ENCODE measurements at regions of chr19 and their contacts with region 1.

Region 1: DNA sequence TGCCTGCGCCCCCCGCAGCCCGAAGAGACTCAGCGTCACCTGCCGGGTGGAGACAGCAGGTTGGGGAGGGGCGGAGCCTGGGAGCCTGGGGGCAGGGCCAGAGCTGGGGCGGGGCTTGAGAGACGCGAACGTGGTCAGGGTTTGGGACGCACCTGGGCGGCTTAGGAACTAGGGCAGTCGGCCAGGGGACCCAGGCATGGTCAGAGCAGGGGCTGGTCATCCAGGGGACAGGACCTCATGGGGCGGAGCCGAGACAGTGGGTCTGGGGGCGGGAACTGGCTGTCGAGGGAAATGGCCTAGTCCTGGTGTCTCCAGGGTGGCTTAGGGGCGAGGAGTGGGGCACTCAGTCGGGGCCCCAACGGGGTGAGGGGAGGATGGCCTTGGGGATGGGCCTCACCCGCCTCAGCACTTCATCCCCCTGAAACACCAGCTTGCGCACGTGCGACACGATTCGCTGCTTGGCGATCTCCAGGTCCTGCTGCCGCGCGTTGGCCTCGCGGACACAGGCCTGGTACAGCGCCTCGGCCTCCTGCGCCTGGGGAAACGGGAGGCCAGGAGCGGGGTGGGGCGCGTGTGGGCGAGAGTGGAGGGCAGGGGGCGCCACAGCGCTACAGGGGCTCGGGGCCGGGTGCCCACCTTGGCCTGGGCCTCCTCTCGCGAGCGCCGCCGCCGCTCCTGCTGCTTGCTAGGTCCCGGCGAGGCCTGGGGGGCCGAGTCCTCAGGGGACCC is 5.8 kb downstream of the GMIP start:
- DNase-seq: peak in 1 of 3 donors; percentile 61
- ATAC-seq: no peak
- H3K4me3 ChIP-seq: no peak overlapping the region
- H3K27ac ChIP-seq: no peak overlapping the region
- H3K4me1 ChIP-seq: no peaks in the 10 kb centered on the region
- H3K27me3 ChIP-seq: no peaks in the 10 kb centered on the region

Region 2: GRCh38 chr19:19493832-19494546 is 143.7 kb before region 1 on chr19:
- intact Hi-C with region 1: no loop called
- DNase-seq: peak in 1 of 3 donors; percentile 46
- ATAC-seq: no peak
- H3K4me3 ChIP-seq: no peak overlapping the region
- H3K27ac ChIP-seq: no peak overlapping the region
- H3K4me1 ChIP-seq: peaks cover 7% of the 10 kb centered on the region
- H3K27me3 ChIP-seq: no peaks in the 10 kb centered on the region

Region 3: GRCh38 chr19:19554074-19555023 is 83.3 kb before region 1 on chr19:
- intact Hi-C with region 1: loop called in 1 of 4 experiments (anchors 5 kb)
- DNase-seq: peak in 1 of 3 donors; percentile 71
- ATAC-seq: peak; percentile 23 to 59
- H3K4me3 ChIP-seq: no peak overlapping the region
- H3K27ac ChIP-seq: no peak overlapping the region
- H3K4me1 ChIP-seq: no peaks in the 10 kb centered on the region
- H3K27me3 ChIP-seq: no peaks in the 10 kb centered on the region